K562 (cell line): ENCODE measurements at regions of chr15 and their contacts with region 1.

Region 1: DNA sequence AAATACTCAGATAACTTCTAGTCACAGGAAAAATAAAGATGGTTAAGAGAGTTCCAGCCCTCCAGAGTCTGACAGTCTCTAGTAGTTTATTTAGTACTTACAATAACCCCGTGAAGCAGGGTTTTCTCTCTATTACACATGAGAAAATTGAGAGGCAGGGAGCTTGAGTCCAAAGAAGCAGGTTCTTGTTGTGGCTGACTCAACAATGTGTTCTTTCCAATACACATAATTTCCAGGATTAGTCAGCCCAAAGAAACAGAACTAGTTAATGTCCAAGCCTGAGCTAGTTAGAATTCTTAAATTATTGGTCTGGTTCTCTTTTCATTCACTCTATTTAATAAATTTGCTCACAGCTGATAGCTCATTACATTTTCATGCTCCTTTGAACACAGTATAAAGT is 49.9 kb downstream of the ALDH1A2 start:
- DNase-seq: no peak
- ATAC-seq: peak; percentile 24
- H3K4me3 ChIP-seq: no peak overlapping the region
- H3K27ac ChIP-seq: peak overlapping the region; percentile 56; the same call in 1 of the 3 replicates
- H3K4me1 ChIP-seq: peaks cover 0 to 17% of the 10 kb centered on the region in 2 experiments; a peak in 3 of 5 replicates
- H3K27me3 ChIP-seq: no peaks in the 10 kb centered on the region
- CTCF ChIP-seq: no peak
- EP300 ChIP-seq: no peak
- POLR2A ChIP-seq: no peak
- RAD21 ChIP-seq: no peak

Region 2: GRCh38 chr15:58063614-58064013 is 48.0 kb after region 1 on chr15:
- CTCF ChIA-PET with region 1: no interaction called
- POLR2A ChIA-PET with region 1: no interaction called
- in situ Hi-C with region 1: no loop called
- intact Hi-C with region 1: loop called (anchors 2 kb)
- DNase-seq: no peak
- ATAC-seq: no peak
- H3K4me3 ChIP-seq: peak overlapping the region; percentile 89
- H3K27ac ChIP-seq: peak overlapping the region; percentile 82
- H3K4me1 ChIP-seq: peaks cover 17 to 25% of the 10 kb centered on the region in 2 experiments
- H3K27me3 ChIP-seq: no peaks in the 10 kb centered on the region
- CTCF ChIP-seq: no peak
- EP300 ChIP-seq: no peak
- POLR2A ChIP-seq: no peak
- RAD21 ChIP-seq: no peak